ENCODE measurements at regions of chr9 and their contacts with region 1.

Region 1: DNA sequence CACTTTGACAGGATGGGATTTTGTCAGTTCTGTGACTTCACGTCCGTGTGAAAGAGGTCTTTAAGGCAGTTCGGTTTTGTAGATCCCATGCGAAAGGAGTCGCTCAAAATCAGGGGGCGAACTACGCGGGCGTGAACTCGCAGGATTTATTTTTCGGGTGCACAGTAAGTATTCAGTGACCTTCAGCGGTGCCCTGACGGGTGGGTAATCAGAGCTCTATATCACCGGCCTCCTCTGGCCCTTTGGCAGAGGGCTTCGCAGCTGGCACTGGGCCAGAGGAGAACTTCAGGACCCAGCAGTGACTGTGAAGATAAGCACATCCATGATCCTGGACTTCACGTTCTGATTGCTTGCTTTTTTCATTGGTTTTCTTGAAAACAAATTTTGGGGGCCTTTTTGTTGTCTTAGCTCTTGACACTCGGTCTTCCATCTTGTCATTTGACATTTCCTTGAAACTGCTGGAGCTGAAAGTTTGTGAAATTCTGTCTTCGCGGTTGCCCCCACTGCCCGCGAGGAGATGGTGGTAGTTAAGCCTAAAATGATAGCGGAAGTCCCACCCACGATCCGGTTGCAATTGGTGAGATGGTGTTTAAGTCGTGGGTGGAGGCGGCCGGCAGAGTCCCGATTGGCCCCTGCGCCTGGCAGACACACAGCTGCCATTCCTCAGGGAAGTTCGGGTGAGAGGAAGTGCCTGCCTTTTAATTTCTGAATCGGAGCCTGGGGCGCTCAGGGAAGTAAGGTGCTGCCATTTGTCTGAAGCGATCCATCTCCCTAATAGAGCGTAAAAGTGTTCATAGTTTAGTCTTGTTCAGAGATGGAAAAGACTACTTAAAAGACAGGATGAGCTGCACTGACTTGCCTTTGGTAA is at the start of gene FAM120AOS:
- DNase-seq: peak; percentile 71
- ATAC-seq: peak; percentile 81
- H3K4me3 ChIP-seq: peak within 1 kb of the TSS; percentile 86
- H3K27ac ChIP-seq: peak within 1 kb of the TSS; percentile 83
- H3K4me1 ChIP-seq: peaks cover 7% of the 10 kb centered on the region; the same call in 1 of the 2 replicates
- H3K27me3 ChIP-seq: no peaks in the 10 kb centered on the region
- CTCF ChIP-seq: no peak
- EP300 ChIP-seq: no peak
- POLR2A ChIP-seq: peak; percentile 52; the same call in 1 of the 2 replicates
- RAD21 ChIP-seq: no peak
- polyA plus RNA-seq, gene FAM120AOS: 15.9 to 18.8 TPM

Region 2: GRCh38 chr9:93095205-93096130 is 357.8 kb before region 1 on chr9:
- CTCF ChIA-PET with region 1: no interaction called
- POLR2A ChIA-PET with region 1: no interaction called
- RAD21 ChIA-PET with region 1: no interaction called
- SMC1A ChIA-PET with region 1: no interaction called
- in situ Hi-C with region 1: no loop called
- intact Hi-C with region 1: loop called (anchors 5 kb)
- DNase-seq: peak; percentile 85
- ATAC-seq: peak; percentile 81
- H3K4me3 ChIP-seq: peak overlapping the region; percentile 54
- H3K27ac ChIP-seq: peak overlapping the region; percentile 99
- H3K4me1 ChIP-seq: peaks cover 61% of the 10 kb centered on the region
- H3K27me3 ChIP-seq: no peaks in the 10 kb centered on the region
- CTCF ChIP-seq: no peak
- EP300 ChIP-seq: no peak
- POLR2A ChIP-seq: peak; percentile 78
- RAD21 ChIP-seq: no peak

Region 3: DNA sequence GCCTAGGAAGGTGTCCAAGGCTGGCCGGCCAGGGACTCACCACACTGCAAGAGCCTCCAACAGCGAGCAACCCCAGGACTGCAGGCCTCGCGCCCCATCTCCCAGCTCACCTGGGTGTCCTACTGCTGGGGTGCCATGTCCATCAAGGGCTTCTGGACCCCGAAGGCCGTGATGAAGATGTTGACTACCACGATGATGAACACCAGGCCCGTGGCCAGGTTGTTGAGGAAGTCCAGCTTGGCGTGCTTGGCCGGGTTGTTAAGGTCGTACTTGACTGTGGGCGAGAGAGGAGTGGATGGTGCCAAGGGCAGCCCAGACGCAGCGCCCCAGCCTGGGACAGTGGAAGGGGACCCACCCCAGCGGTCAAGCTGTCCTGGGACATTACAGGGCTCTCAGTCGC is 328.5 kb before region 1 on chr9:
- CTCF ChIA-PET with region 1: no interaction called
- POLR2A ChIA-PET with region 1: no interaction called
- RAD21 ChIA-PET with region 1: no interaction called
- SMC1A ChIA-PET with region 1: no interaction called
- in situ Hi-C with region 1: no loop called
- intact Hi-C with region 1: no loop called
- DNase-seq: no peak
- ATAC-seq: no peak
- H3K4me3 ChIP-seq: no peak overlapping the region
- H3K27ac ChIP-seq: no peak overlapping the region
- H3K4me1 ChIP-seq: peaks cover 15% of the 10 kb centered on the region
- H3K27me3 ChIP-seq: no peaks in the 10 kb centered on the region
- CTCF ChIP-seq: no peak
- EP300 ChIP-seq: no peak
- POLR2A ChIP-seq: no peak
- RAD21 ChIP-seq: no peak

Region 4: DNA sequence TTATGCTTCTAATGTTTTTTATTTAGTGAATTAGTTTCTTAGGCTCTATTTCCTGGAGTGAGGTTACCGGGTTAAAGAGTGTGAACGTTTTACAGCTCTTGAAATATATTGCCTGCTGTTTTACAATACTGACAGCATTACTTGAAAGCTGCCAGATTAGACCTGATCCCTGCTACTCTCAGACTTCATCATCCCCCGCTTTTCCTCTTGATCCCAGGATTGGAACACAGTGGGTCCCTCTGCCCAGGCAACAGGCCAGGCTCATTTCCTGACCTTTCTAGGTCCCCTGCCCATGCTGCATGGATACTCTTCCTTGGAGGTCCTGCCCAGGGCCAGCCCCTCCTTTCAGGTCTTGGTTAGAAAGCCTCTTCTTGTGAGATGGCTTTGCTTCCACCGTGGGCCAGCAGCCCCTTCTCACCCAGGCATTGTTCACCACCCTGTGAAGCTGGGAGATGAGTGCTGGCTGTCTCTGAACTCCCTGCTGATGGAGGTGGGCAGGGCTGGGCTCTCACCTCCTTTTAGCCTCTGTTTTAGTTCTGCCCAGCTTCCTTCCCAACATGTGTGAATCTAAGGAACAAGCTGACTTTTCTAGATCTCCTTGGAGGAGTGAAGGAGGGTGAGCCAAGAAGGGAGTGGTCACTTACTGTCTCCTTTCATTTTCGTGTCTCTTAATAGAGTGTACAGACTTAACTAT is 15.6 kb after region 1 on chr9:
- CTCF ChIA-PET with region 1: interaction called, 17 read pairs
- POLR2A ChIA-PET with region 1: interaction called, 64 read pairs
- RAD21 ChIA-PET with region 1: interaction called, 17 read pairs
- SMC1A ChIA-PET with region 1: interaction called, 34 read pairs
- in situ Hi-C with region 1: no loop called
- intact Hi-C with region 1: no loop called
- DNase-seq: no peak
- ATAC-seq: peak; percentile 40
- H3K4me3 ChIP-seq: 0 out of 2 replicates have a peak overlapping the region, but pooled peaks have one; percentile 19
- H3K27ac ChIP-seq: peak overlapping the region; percentile 14; the same call in 1 of the 2 replicates
- H3K4me1 ChIP-seq: peaks cover 25% of the 10 kb centered on the region
- H3K27me3 ChIP-seq: no peaks in the 10 kb centered on the region
- CTCF ChIP-seq: no peak
- EP300 ChIP-seq: no peak
- POLR2A ChIP-seq: no peak
- RAD21 ChIP-seq: no peak

Region 5: DNA sequence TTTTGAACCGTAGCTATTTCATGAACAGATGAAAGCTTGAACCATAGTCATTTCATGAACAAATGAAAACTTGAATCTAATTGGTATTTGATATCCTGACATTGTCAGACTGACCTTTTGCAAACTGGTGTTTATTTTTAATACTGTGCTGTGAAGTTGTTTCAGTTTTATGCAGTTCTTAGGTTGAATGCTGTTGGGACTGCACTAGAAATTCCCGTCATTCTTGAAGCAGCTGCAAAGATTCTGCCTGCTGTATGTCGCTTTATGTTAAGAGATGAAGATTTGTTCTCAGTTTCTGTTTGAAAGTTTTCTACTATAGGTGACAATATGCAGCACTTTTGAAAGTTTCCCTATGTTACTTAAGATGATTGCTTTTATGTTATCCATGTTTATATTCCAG is 22.6 kb after region 1 on chr9:
- CTCF ChIA-PET with region 1: interaction called, 5 read pairs
- POLR2A ChIA-PET with region 1: interaction called, 10 read pairs
- RAD21 ChIA-PET with region 1: interaction called, 3 read pairs
- SMC1A ChIA-PET with region 1: interaction called, 8 read pairs
- in situ Hi-C with region 1: no loop called
- intact Hi-C with region 1: no loop called
- DNase-seq: no peak
- ATAC-seq: no peak
- H3K4me3 ChIP-seq: no peak overlapping the region
- H3K27ac ChIP-seq: no peak overlapping the region
- H3K4me1 ChIP-seq: 0 out of 2 replicates have a peak, but pooled peaks cover 4% of the 10 kb centered on the region
- H3K27me3 ChIP-seq: no peaks in the 10 kb centered on the region
- CTCF ChIP-seq: no peak
- EP300 ChIP-seq: no peak
- POLR2A ChIP-seq: no peak
- RAD21 ChIP-seq: no peak

Region 6: GRCh38 chr9:93566408-93567270 is 113.4 kb after region 1 on chr9:
- CTCF ChIA-PET with region 1: interaction called, 16 read pairs
- POLR2A ChIA-PET with region 1: interaction called, 6 read pairs
- RAD21 ChIA-PET with region 1: interaction called, 11 read pairs
- SMC1A ChIA-PET with region 1: interaction called, 9 read pairs
- in situ Hi-C with region 1: no loop called
- intact Hi-C with region 1: loop called (anchors 5 kb)
- DNase-seq: peak; percentile 69
- ATAC-seq: peak; percentile 97
- H3K4me3 ChIP-seq: peak overlapping the region; percentile 73
- H3K27ac ChIP-seq: peak overlapping the region; percentile 88
- H3K4me1 ChIP-seq: peaks cover 7% of the 10 kb centered on the region
- H3K27me3 ChIP-seq: no peaks in the 10 kb centered on the region
- CTCF ChIP-seq: peak; percentile 93 to 96 (median 94); a peak in 5 of 6 replicates
- EP300 ChIP-seq: no peak
- POLR2A ChIP-seq: peak; percentile 92
- RAD21 ChIP-seq: peak; percentile 71

Region 7: DNA sequence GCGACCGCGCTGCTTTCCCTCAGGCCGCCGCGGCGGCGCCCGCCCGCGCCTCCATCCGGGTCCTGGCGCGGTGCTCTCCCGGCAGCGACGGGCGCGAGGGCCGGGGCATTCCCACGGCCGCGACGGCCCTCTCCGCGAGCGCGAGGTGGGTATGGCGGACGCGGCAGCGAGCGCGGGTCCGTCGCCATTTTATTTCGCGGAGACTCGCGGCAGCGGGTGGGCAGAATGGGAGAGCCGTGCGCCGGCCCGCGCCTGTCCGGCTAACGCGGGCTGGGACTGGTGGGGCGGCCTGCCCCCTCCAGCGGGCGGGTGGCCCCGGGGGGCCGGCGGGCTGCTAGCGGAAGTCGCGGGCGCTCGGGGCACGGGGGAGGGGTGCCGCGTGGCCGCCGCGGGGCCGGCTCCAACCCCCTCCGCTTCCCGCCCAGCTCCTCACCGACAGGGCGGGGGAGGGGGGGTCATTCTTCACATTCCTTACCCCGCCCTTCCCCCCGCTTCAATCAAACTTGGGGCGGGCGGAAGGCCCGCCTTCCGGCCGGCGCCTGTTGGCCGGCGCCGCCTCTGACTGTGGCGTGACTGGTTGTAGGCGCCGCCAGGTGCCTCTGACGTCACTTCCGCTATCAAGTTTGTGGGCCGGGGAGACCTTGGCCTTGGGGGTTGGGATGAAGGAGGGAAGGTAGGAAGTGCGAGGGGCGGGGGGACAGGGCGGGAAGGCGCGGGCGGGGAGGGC is 713.1 kb after region 1 on chr9:
- CTCF ChIA-PET with region 1: no interaction called
- POLR2A ChIA-PET with region 1: no interaction called
- RAD21 ChIA-PET with region 1: no interaction called
- SMC1A ChIA-PET with region 1: no interaction called
- in situ Hi-C with region 1: no loop called
- intact Hi-C with region 1: loop called (anchors 10 kb)
- DNase-seq: peak; percentile 88
- ATAC-seq: peak; percentile 63
- H3K4me3 ChIP-seq: peak overlapping the region; percentile 89
- H3K27ac ChIP-seq: peak overlapping the region; percentile 99
- H3K4me1 ChIP-seq: peaks cover 10% of the 10 kb centered on the region
- H3K27me3 ChIP-seq: no peaks in the 10 kb centered on the region
- CTCF ChIP-seq: peak in 2 of 3 experiments; percentile 2 to 24; a peak in 3 of 6 replicates
- EP300 ChIP-seq: peak in 1 of 2 experiments; percentile 47; a peak in 1 of 4 replicates
- POLR2A ChIP-seq: peak; percentile 84
- RAD21 ChIP-seq: no peak